Activated CD8-positive, alpha-beta T cell treated with anti-CD3 and anti-CD28 coated beads, Interleukin-2, amount 10 ng/mL, durations not matched to agents 7 days and 5 days (primary cell): ENCODE measurements at regions of chr6 and their contacts with region 1.

Region 1: GRCh38 chr6:90274451-90275030 is 22.1 kb downstream of the BACH2 start:
- DNase-seq: peak; percentile 94
- ATAC-seq: peak; percentile 87
- H3K4me3 Mint-ChIP-seq: peak overlapping the region; percentile 75
- H3K27ac Mint-ChIP-seq: peak overlapping the region; percentile 94
- H3K4me1 Mint-ChIP-seq: peaks cover 91% of the 10 kb centered on the region
- H3K27me3 Mint-ChIP-seq: no peaks in the 10 kb centered on the region

Region 2: DNA sequence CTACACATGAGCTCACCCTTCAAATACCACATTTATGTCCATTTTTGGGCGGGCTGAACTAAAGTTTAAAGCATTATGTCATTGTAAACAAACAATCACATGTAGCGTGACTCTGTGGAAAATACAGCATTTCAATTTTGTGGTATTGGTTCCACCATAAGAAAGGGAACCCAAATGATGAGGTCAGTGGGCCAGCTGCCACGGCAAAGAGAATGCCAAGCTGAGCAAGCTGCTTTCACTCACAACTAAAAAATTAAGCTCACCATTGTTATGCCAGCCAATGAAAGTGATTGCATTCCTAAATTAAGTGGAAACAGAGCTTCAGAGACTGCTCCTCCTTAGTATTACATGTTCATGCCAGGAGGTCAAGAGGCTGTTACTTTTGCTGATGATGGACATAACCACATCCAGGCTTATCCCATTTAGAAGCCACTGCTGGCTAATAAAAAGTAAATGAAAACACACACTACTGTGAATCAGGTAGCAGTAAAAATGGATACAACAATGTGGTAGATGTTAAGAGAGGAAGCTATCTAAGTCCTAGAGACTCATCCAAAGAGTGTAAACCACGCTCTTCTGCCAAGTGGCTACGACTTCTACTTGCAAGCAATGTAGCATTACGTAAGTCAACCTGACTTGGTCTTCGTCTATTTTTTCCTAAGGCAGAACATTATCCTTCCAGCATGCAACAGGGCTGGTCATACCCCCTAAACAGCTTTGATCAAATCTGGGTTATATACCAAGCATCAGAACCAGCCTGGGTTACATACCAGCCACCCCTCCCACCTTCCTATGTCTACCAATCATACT is 142.7 kb before region 1 on chr6:
- CTCF ChIA-PET with region 1: no interaction called
- POLR2A ChIA-PET with region 1: no interaction called
- DNase-seq: no peak
- ATAC-seq: peak; percentile 21
- H3K4me3 Mint-ChIP-seq: no peak overlapping the region
- H3K27ac Mint-ChIP-seq: no peak overlapping the region
- H3K4me1 Mint-ChIP-seq: peaks cover 46% of the 10 kb centered on the region
- H3K27me3 Mint-ChIP-seq: no peaks in the 10 kb centered on the region

Region 3: GRCh38 chr6:90216072-90216977 is 58.2 kb before region 1 on chr6:
- CTCF ChIA-PET with region 1: interaction called, 13 read pairs
- POLR2A ChIA-PET with region 1: interaction called, 37 read pairs
- DNase-seq: peak; percentile 59
- ATAC-seq: peak; percentile 25
- H3K4me3 Mint-ChIP-seq: peak overlapping the region; percentile 57
- H3K27ac Mint-ChIP-seq: no peak overlapping the region
- H3K4me1 Mint-ChIP-seq: peaks cover 25% of the 10 kb centered on the region
- H3K27me3 Mint-ChIP-seq: no peaks in the 10 kb centered on the region

Region 4: GRCh38 chr6:90230548-90231215 is 43.9 kb before region 1 on chr6:
- CTCF ChIA-PET with region 1: interaction called, 13 read pairs
- POLR2A ChIA-PET with region 1: interaction called, 8 read pairs
- DNase-seq: no peak
- ATAC-seq: no peak
- H3K4me3 Mint-ChIP-seq: peak overlapping the region; percentile 20
- H3K27ac Mint-ChIP-seq: peak overlapping the region; percentile 75
- H3K4me1 Mint-ChIP-seq: peaks cover 95% of the 10 kb centered on the region
- H3K27me3 Mint-ChIP-seq: no peaks in the 10 kb centered on the region

Region 5: DNA sequence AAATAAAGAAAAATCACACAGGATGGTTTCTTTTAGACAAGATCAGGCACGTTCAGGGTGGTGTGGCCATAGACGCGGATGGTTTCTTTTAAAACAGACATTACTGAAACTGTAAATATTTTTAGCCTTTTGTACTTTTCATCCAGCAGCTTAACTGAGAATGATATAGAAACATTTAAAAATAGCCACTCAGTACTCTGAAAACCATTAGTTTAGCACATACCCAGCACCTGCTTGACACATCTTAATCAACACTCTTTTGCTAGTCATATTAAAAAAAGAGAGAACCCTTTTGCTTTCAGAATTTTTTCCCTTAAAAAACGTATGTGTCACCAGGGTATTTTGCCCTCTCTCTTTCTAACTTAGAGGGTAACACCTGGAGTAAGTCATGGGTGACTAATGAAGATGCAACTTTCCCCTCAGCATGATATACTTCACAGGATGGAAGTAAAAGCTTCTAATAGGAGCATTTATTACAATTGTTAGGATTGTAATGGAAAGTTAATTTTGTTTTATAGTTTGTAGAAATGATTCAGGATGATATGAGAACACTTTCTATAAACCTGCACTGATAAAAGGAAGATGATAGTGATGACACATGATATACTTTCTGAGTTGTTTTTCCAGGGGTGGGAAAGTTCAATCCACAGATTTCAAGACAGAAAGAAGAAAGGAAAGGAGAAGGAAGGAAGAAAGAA is 23.1 kb before region 1 on chr6:
- CTCF ChIA-PET with region 1: interaction called, 10 read pairs
- POLR2A ChIA-PET with region 1: interaction called, 4 read pairs
- DNase-seq: no peak
- ATAC-seq: peak; percentile 22
- H3K4me3 Mint-ChIP-seq: peak overlapping the region; percentile 9
- H3K27ac Mint-ChIP-seq: peak overlapping the region; percentile 75
- H3K4me1 Mint-ChIP-seq: peaks cover 78% of the 10 kb centered on the region
- H3K27me3 Mint-ChIP-seq: no peaks in the 10 kb centered on the region

Region 6: GRCh38 chr6:90263633-90264032 is 10.9 kb before region 1 on chr6:
- CTCF ChIA-PET with region 1: interaction called, 24 read pairs
- POLR2A ChIA-PET with region 1: interaction called, 4 read pairs
- DNase-seq: no peak
- ATAC-seq: peak; percentile 25
- H3K4me3 Mint-ChIP-seq: no peak overlapping the region
- H3K27ac Mint-ChIP-seq: peak overlapping the region; percentile 39
- H3K4me1 Mint-ChIP-seq: peaks cover 96% of the 10 kb centered on the region
- H3K27me3 Mint-ChIP-seq: no peaks in the 10 kb centered on the region